CD4-positive, alpha-beta T cell (primary cell): ENCODE measurements at regions of chr13 and their contacts with region 1.

Region 1: DNA sequence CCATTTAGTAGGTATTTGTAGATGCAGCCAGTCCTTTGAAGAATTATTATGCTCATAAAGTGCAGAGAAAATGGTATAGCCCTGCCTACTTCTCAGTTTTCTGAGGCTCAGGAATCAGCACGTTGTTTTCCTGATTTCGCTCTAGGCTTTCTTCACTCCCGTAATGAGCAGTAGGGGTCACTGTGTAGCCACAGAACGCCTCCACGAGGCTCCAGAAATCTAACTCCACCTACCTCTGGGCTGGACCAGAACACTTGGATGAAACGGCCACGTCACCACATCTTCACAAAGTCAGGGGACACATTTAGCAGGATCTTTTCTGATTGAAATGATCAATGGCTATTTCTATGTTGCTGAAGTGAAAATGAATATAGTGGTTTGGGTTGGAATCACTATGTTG is 49.8 kb upstream of the GTF3A start:
- DNase-seq: peak; percentile 19 to 80 (median 38)
- ATAC-seq: peak; percentile 82
- H3K4me3 ChIP-seq: no peak overlapping the region
- H3K4me3 Mint-ChIP-seq: no peak overlapping the region
- H3K27ac ChIP-seq: no peak overlapping the region
- H3K27ac Mint-ChIP-seq: no peak overlapping the region
- H3K4me1 ChIP-seq: peaks cover 3% of the 10 kb centered on the region
- H3K4me1 Mint-ChIP-seq: peaks cover 5% of the 10 kb centered on the region
- H3K27me3 ChIP-seq: peaks cover 5 to 7% of the 10 kb centered on the region in 2 experiments
- H3K27me3 Mint-ChIP-seq: peaks cover 34% of the 10 kb centered on the region
- CTCF ChIP-seq: peak; percentile 75

Region 2: GRCh38 chr13:26247608-26248007 is 1127.0 kb before region 1 on chr13:
- CTCF ChIA-PET with region 1: no interaction called
- POLR2A ChIA-PET with region 1: no interaction called
- intact Hi-C with region 1: no loop called
- DNase-seq: no peak
- ATAC-seq: no peak
- H3K4me3 ChIP-seq: no peak overlapping the region
- H3K4me3 Mint-ChIP-seq: no peak overlapping the region
- H3K27ac ChIP-seq: no peak overlapping the region
- H3K27ac Mint-ChIP-seq: no peak overlapping the region
- H3K4me1 ChIP-seq: no peaks in the 10 kb centered on the region
- H3K4me1 Mint-ChIP-seq: no peaks in the 10 kb centered on the region
- H3K27me3 ChIP-seq: peaks cover 0 to under 1% of the 10 kb centered on the region in 2 experiments
- H3K27me3 Mint-ChIP-seq: no peaks in the 10 kb centered on the region
- CTCF ChIP-seq: no peak

Region 3: GRCh38 chr13:27396252-27396846 is 21.7 kb after region 1 on chr13:
- CTCF ChIA-PET with region 1: no interaction called
- POLR2A ChIA-PET with region 1: no interaction called
- intact Hi-C with region 1: no loop called
- DNase-seq: no peak
- ATAC-seq: no peak
- H3K4me3 ChIP-seq: no peak overlapping the region
- H3K4me3 Mint-ChIP-seq: no peak overlapping the region
- H3K27ac ChIP-seq: no peak overlapping the region
- H3K27ac Mint-ChIP-seq: no peak overlapping the region
- H3K4me1 ChIP-seq: peaks cover 3% of the 10 kb centered on the region
- H3K4me1 Mint-ChIP-seq: no peaks in the 10 kb centered on the region
- H3K27me3 ChIP-seq: no peaks in the 10 kb centered on the region
- H3K27me3 Mint-ChIP-seq: no peaks in the 10 kb centered on the region
- CTCF ChIP-seq: no peak

Region 4: DNA sequence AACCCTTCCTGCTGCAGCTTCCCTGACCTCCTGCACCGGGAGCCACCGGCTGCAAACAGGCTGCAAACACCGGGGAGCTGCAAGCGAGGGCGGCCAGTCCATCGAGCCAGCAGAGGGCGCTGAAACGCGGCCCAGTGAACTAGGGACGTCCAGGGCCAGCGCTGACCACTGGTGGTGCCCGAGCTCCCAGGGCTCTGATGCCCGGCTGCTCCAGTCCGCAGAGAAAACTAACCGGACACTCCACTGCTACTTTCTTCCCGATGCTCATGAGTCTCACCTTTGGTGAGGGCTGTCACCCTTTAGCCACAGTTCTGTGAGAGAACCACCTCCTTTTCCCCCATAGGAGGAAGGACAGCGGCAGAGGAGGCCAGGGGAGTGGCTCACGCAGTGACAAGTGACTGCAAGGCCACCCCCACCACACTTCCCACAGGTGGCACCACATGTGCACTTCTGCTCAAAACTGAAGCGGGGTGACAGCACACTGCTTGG is 158.5 kb after region 1 on chr13:
- CTCF ChIA-PET with region 1: no interaction called
- POLR2A ChIA-PET with region 1: no interaction called
- intact Hi-C with region 1: loop called in 1 of 2 experiments (anchors 10 kb)
- DNase-seq: peak in 13 of 14 experiments; percentile 18 to 68 (median 32)
- ATAC-seq: peak; percentile 39
- H3K4me3 ChIP-seq: peak overlapping the region; percentile 24
- H3K4me3 Mint-ChIP-seq: no peak overlapping the region
- H3K27ac ChIP-seq: no peak overlapping the region
- H3K27ac Mint-ChIP-seq: no peak overlapping the region
- H3K4me1 ChIP-seq: peaks cover 8% of the 10 kb centered on the region
- H3K4me1 Mint-ChIP-seq: peaks cover 10% of the 10 kb centered on the region
- H3K27me3 ChIP-seq: no peaks in the 10 kb centered on the region
- H3K27me3 Mint-ChIP-seq: peaks cover 6% of the 10 kb centered on the region
- CTCF ChIP-seq: peak; percentile 68

Region 5: GRCh38 chr13:27712421-27712820 is 337.8 kb after region 1 on chr13:
- CTCF ChIA-PET with region 1: no interaction called
- POLR2A ChIA-PET with region 1: no interaction called
- intact Hi-C with region 1: loop called (anchors 1 to 2 kb)
- DNase-seq: peak in 10 of 14 experiments; percentile 8 to 54 (median 26)
- ATAC-seq: no peak
- H3K4me3 ChIP-seq: no peak overlapping the region
- H3K4me3 Mint-ChIP-seq: no peak overlapping the region
- H3K27ac ChIP-seq: no peak overlapping the region
- H3K27ac Mint-ChIP-seq: no peak overlapping the region
- H3K4me1 ChIP-seq: no peaks in the 10 kb centered on the region
- H3K4me1 Mint-ChIP-seq: no peaks in the 10 kb centered on the region
- H3K27me3 ChIP-seq: peaks cover 0 to 5% of the 10 kb centered on the region in 2 experiments
- H3K27me3 Mint-ChIP-seq: peaks cover 21% of the 10 kb centered on the region
- CTCF ChIP-seq: peak; percentile 61

Region 6: GRCh38 chr13:27980280-27980998 is 605.8 kb after region 1 on chr13:
- CTCF ChIA-PET with region 1: no interaction called
- POLR2A ChIA-PET with region 1: no interaction called
- intact Hi-C with region 1: loop called in 1 of 2 experiments (anchors 1 kb)
- DNase-seq: no peak
- ATAC-seq: no peak
- H3K4me3 ChIP-seq: no peak overlapping the region
- H3K4me3 Mint-ChIP-seq: no peak overlapping the region
- H3K27ac ChIP-seq: no peak overlapping the region
- H3K27ac Mint-ChIP-seq: no peak overlapping the region
- H3K4me1 ChIP-seq: peaks cover 8% of the 10 kb centered on the region
- H3K4me1 Mint-ChIP-seq: peaks cover 13% of the 10 kb centered on the region
- H3K27me3 ChIP-seq: peaks cover 50 to 67% of the 10 kb centered on the region in 2 experiments
- H3K27me3 Mint-ChIP-seq: peaks cover 80% of the 10 kb centered on the region
- CTCF ChIP-seq: no peak